ENCODE measurements at regions of chr6 and their contacts with region 1.

Region 1: DNA sequence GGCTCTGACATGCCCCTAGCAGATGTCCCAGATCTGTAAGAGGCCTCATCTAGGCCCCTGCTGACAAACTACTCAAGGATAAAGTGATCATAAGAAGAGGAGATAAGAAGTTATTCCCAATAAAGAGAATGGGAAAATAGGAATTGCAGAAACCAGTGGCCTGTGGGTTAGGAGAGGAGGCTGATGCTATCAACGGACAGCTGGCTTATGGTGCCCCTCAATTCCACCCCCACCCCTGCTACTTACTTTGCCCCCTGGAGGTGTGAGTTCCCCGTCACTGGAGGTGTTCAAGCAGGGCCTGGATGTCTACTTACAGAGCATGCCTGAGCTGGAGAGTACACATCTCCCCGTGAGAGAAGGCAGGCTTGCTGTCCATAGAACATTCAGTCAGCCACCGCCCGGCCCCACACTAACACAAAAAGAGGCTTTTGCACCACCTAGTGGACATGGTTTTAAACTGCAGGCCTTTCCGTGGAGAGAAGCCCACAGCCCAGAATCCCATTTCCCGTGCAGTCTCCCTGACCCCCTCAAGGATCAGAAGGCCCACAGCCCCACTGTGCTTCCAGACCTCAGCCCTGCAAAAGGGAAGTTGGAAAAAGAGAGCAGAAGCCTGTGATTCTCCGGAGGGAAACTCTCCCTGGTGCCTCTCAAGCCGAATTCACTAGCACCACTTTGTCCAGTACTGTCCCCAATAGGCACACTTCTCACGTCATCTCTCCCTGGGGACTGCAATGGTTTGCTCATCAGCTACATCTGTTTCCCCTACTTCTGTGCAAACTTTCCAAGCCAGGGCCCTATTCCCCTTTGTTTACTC is 23.8 kb upstream of the BNIP5 start:
- DNase-seq: peak; percentile 93
- H3K4me3 ChIP-seq: no peak overlapping the region
- H3K27ac ChIP-seq: no peak overlapping the region
- H3K4me1 ChIP-seq: peaks cover 11 to 28% (median 23%) of the 10 kb centered on the region in 4 donors
- H3K27me3 ChIP-seq: no peaks in the 10 kb centered on the region
- CTCF ChIP-seq: peak; percentile 81 to 88 (median 84)
- EP300 ChIP-seq: no peak
- POLR2A ChIP-seq: no peak

Region 2: DNA sequence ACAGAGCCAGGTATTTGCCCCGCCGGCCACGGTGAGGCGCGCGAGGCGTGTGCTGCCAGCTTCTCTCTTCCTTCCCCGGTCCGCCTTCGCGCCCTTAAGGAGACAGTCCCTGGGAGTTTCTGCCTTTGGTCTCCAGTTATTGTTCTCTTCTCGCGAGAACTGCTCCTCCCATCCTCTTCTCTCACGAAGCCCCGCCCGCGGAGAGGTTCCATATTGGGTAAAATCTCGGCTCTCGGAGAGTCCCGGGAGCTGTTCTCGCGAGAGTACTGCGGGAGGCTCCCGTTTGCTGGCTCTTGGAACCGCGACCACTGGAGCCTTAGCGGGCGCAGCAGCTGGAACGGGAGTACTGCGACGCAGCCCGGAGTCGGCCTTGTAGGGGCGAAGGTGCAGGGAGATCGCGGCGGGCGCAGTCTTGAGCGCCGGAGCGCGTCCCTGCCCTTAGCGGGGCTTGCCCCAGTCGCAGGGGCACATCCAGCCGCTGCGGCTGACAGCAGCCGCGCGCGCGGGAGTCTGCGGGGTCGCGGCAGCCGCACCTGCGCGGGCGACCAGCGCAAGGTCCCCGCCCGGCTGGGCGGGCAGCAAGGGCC is 332.9 kb before region 1 on chr6 and contains the start of gene MAPK14:
- intact Hi-C with region 1: loop called (anchors 10 kb)
- DNase-seq: peak; percentile 100
- H3K4me3 ChIP-seq: peak within 1 kb of the TSS; percentile 83 to 96 (median 95)
- H3K27ac ChIP-seq: peak within 1 kb of the TSS; percentile 92 to 96 (median 94)
- H3K4me1 ChIP-seq: peaks cover 13 to 44% (median 41%) of the 10 kb centered on the region in 4 donors
- H3K27me3 ChIP-seq: peaks cover 0 to 13% (median 5%) of the 10 kb centered on the region in 4 donors
- CTCF ChIP-seq: peak; percentile 91 to 99 (median 95)
- EP300 ChIP-seq: no peak
- POLR2A ChIP-seq: peak; percentile 92
- total RNA-seq, gene MAPK14: 53.2 to 70.7 (median 66.9) TPM

Region 3: GRCh38 chr6:36301781-36302180 is 58.7 kb before region 1 on chr6:
- intact Hi-C with region 1: loop called (anchors 2 kb)
- DNase-seq: no peak
- H3K4me3 ChIP-seq: no peak overlapping the region
- H3K27ac ChIP-seq: no peak overlapping the region
- H3K4me1 ChIP-seq: peaks cover 0 to 14% (median 6%) of the 10 kb centered on the region in 4 donors
- H3K27me3 ChIP-seq: peaks cover 0 to 13% (median 0%) of the 10 kb centered on the region in 4 donors
- CTCF ChIP-seq: no peak
- EP300 ChIP-seq: no peak
- POLR2A ChIP-seq: no peak

Region 4: DNA sequence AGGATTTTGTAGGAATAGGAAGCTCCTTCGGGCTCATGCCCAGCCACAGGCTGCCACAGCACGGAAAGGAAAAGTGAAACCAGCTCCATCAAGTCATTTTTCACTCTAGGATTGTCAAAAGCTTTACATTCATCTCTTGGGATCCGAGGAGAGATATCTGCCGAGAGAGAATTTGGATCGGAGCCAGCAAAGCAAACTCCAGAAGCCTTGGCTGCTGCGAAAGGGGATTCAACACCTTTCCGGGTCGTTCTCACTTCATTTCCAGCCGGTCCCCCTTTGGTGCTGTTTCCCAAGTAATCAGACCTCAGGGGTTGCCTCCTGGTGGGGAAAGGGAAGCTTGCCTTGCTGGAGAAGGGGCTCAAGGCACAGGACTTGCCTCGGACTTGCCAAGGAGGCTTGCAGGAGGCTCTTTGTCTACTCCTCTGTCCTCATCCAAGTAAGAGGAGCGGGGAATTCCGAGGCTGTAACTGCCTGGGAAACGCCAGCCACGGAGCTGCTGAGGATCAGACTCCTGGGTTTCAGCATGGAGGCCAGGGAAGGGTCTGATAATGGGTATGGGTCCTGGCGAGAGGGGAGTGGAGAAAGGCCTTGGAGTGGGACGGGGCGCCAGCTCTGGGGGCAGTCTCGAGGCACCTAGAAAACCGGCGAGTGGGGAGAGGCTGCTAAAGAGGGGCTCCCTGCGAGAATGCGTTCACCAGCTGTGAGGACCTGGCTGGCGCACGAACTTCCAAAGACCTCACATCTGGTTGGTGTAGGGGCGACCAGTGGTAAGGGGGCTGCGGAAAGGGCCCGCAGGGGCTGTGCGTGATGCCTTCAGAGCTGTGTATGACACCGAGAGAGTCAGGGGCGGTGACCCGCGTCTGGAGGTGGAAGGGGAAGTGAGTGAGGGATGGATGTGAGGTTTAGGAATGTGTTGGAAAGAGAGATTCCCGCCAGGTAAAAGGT is 26.3 kb after region 1 on chr6:
- intact Hi-C with region 1: no loop called
- DNase-seq: no peak
- H3K4me3 ChIP-seq: peak overlapping the region; percentile 60 to 66 (median 62)
- H3K27ac ChIP-seq: peak overlapping the region in 3 of 4 donors; percentile 43 to 47 (median 46)
- H3K4me1 ChIP-seq: peaks cover 11 to 25% (median 24%) of the 10 kb centered on the region in 4 donors
- H3K27me3 ChIP-seq: no peaks in the 10 kb centered on the region
- CTCF ChIP-seq: peak in 1 of 3 experiments; percentile 13
- EP300 ChIP-seq: no peak
- POLR2A ChIP-seq: no peak

Measured in esophagus muscularis mucosa (tissue), 4 donors.